ENCODE measurements at regions of chr3 and their contacts with region 1.

Region 1: GRCh38 chr3:62188681-62189383 is 184.5 kb downstream of the FEZF2 start:
- DNase-seq: peak; percentile 61
- H3K4me3 Mint-ChIP-seq: no peak overlapping the region
- H3K27ac Mint-ChIP-seq: no peak overlapping the region
- H3K4me1 Mint-ChIP-seq: no peaks in the 10 kb centered on the region
- H3K27me3 Mint-ChIP-seq: no peaks in the 10 kb centered on the region

Region 2: GRCh38 chr3:62201438-62202035 is 12.7 kb after region 1 on chr3:
- CTCF ChIA-PET with region 1: interaction called, 22 read pairs
- POLR2A ChIA-PET with region 1: no interaction called
- DNase-seq: no peak
- H3K4me3 Mint-ChIP-seq: no peak overlapping the region
- H3K27ac Mint-ChIP-seq: no peak overlapping the region
- H3K4me1 Mint-ChIP-seq: no peaks in the 10 kb centered on the region
- H3K27me3 Mint-ChIP-seq: no peaks in the 10 kb centered on the region

Region 3: GRCh38 chr3:62277450-62277849 is 88.6 kb after region 1 on chr3:
- CTCF ChIA-PET with region 1: no interaction called
- POLR2A ChIA-PET with region 1: no interaction called
- DNase-seq: no peak
- H3K4me3 Mint-ChIP-seq: no peak overlapping the region
- H3K27ac Mint-ChIP-seq: no peak overlapping the region
- H3K4me1 Mint-ChIP-seq: no peaks in the 10 kb centered on the region
- H3K27me3 Mint-ChIP-seq: no peaks in the 10 kb centered on the region